T-cell (primary cell): ENCODE measurements at regions of chr19 and their contacts with region 1.

Region 1: DNA sequence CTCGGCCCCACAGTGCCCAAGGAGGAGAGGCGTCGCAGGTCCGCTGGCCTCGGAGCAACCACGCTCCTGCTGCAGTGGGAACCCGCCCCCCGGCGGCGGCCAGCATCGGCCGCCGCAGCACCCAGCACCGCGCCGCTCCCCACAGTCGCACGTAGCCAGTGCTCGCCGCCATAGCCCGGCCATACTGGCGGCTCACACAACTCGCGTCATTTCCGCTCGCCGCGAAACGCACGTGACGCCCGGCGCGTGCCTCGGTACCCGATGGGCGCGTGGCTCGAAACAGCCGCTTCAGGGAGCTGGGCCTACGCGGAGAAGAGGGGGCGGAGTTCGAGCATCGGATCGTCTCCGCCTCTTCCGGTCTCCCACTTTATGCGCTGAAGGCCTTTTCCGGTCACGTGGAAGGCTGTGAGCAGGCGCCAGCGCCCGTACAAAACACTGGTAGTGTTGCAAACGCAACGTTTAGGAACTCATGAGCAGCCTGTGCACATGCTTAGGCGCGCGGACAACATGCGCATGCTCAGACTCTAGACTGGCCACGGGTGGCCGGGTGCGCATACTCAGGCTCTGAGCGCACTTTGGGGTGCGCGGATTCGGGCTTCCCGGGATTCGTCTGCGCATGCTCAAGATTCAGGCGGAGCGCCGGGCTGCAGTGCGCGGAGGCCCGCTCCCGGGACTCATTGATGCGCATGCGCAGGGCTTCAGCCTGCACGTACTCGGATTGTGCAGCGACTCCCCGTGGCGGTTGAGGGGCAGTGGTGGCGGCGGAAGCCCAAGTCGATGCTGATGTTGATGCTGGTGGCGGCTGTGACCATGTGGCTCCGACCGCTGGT is at the starts of genes CATSPERD and LONP1:
- DNase-seq: peak; percentile 96 to 100 (median 97)
- ATAC-seq: peak; percentile 90 to 92 (median 91)
- H3K4me3 ChIP-seq: peak within 1 kb of the TSS; percentile 84 to 91
- H3K4me3 Mint-ChIP-seq: peak within 1 kb of the TSS; percentile 87 to 89 (median 89)
- H3K27ac ChIP-seq: peak within 1 kb of the TSS; percentile 86
- H3K27ac Mint-ChIP-seq: peak within 1 kb of the TSS; percentile 95 to 98
- H3K4me1 ChIP-seq: peaks cover 10 to 35% of the 10 kb centered on the region in 2 experiments
- H3K4me1 Mint-ChIP-seq: peaks cover 24 to 33% (median 29%) of the 10 kb centered on the region in 3 donors
- H3K27me3 ChIP-seq: peaks cover 0 to under 1% of the 10 kb centered on the region in 2 experiments
- H3K27me3 Mint-ChIP-seq: peaks cover 0 to 3% of the 10 kb centered on the region in 2 donors
- total RNA-seq, gene CATSPERD: not detected
- total RNA-seq, gene LONP1: 70.0 to 83.9 (median 81.8) TPM

Region 2: GRCh38 chr19:5690125-5690954 is 29.8 kb before region 1 on chr19 and contains the start of gene RPL36:
- CTCF ChIA-PET with region 1: interaction called in 1 of 2 experiments, 18 read pairs
- POLR2A ChIA-PET with region 1: interaction called, 3 to 9 read pairs
- DNase-seq: peak; percentile 93 to 100 (median 97)
- ATAC-seq: peak; percentile 65 to 72 (median 66)
- H3K4me3 ChIP-seq: peak within 1 kb of the TSS; percentile 66 to 95
- H3K4me3 Mint-ChIP-seq: peak within 1 kb of the TSS; percentile 92 to 98 (median 94)
- H3K27ac ChIP-seq: peak within 1 kb of the TSS; percentile 95
- H3K27ac Mint-ChIP-seq: peak within 1 kb of the TSS; percentile 93 to 94
- H3K4me1 ChIP-seq: peaks cover 3 to 59% of the 10 kb centered on the region in 2 experiments
- H3K4me1 Mint-ChIP-seq: peaks cover 26 to 39% (median 33%) of the 10 kb centered on the region in 3 donors
- H3K27me3 ChIP-seq: no peaks in the 10 kb centered on the region
- H3K27me3 Mint-ChIP-seq: no peaks in the 10 kb centered on the region
- total RNA-seq, gene RPL36: 1,208 to 1,613 (median 1,528) TPM